MCF 10A (cell line): ENCODE measurements at regions of chr20 and their contacts with region 1.

Region 1: DNA sequence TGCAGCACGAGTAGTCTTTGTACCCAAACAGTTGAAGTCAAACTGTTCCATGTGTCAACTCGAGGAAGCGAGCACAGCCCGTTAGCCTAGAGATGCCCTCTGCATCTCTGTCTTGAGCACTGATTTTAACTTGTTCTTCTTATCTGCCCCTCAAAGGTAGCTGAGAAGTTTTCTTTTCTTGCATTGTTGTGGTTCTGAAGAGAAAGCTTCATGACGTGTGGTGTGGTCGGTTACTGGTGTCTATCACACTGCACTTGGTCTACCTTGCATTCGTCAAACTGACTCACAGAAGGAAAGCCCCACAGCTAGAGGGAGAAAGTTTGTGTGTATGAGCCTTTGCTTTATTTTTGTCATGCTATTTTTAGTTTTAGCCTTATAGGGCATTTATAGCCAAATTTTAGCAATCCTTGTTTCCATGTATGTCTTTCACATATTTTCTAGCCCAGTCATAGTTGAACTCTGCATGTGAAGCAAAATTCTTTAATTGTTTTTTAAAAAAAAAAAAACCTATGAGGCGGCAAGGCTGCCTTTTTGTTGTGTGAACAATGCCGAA is 115.1 kb downstream of the JAG1 start:
- DNase-seq: peak; percentile 90
- H3K4me3 Mint-ChIP-seq: peak overlapping the region; percentile 18
- H3K27ac Mint-ChIP-seq: peak overlapping the region; percentile 68
- H3K4me1 Mint-ChIP-seq: peaks cover 26% of the 10 kb centered on the region
- H3K27me3 Mint-ChIP-seq: no peaks in the 10 kb centered on the region
- CTCF ChIP-seq: no peak

Region 2: GRCh38 chr20:10573273-10573950 is 14.7 kb after region 1 on chr20:
- CTCF ChIA-PET with region 1: interaction called, 3 read pairs
- POLR2A ChIA-PET with region 1: interaction called, 20 read pairs
- intact Hi-C with region 1: no loop called
- DNase-seq: no peak
- H3K4me3 Mint-ChIP-seq: no peak overlapping the region
- H3K27ac Mint-ChIP-seq: no peak overlapping the region
- H3K4me1 Mint-ChIP-seq: peaks cover 6% of the 10 kb centered on the region
- H3K27me3 Mint-ChIP-seq: no peaks in the 10 kb centered on the region
- CTCF ChIP-seq: no peak

Region 3: GRCh38 chr20:10578607-10579006 is 19.9 kb after region 1 on chr20:
- CTCF ChIA-PET with region 1: interaction called, 5 read pairs
- POLR2A ChIA-PET with region 1: interaction called, 20 read pairs
- intact Hi-C with region 1: no loop called
- DNase-seq: peak; percentile 54
- H3K4me3 Mint-ChIP-seq: no peak overlapping the region
- H3K27ac Mint-ChIP-seq: peak overlapping the region; percentile 71
- H3K4me1 Mint-ChIP-seq: peaks cover 32% of the 10 kb centered on the region
- H3K27me3 Mint-ChIP-seq: no peaks in the 10 kb centered on the region
- CTCF ChIP-seq: no peak

Region 4: GRCh38 chr20:10626896-10627295 is 68.2 kb after region 1 on chr20:
- CTCF ChIA-PET with region 1: interaction called, 7 read pairs
- POLR2A ChIA-PET with region 1: interaction called, 20 read pairs
- intact Hi-C with region 1: no loop called
- DNase-seq: peak; percentile 86
- H3K4me3 Mint-ChIP-seq: no peak overlapping the region
- H3K27ac Mint-ChIP-seq: peak overlapping the region; percentile 27
- H3K4me1 Mint-ChIP-seq: peaks cover 25% of the 10 kb centered on the region
- H3K27me3 Mint-ChIP-seq: no peaks in the 10 kb centered on the region
- CTCF ChIP-seq: no peak

Region 5: GRCh38 chr20:10667077-10667401 is 108.3 kb after region 1 on chr20:
- CTCF ChIA-PET with region 1: interaction called, 35 read pairs
- POLR2A ChIA-PET with region 1: interaction called, 60 read pairs
- intact Hi-C with region 1: loop called (anchors 1 kb)
- DNase-seq: peak; percentile 78
- H3K4me3 Mint-ChIP-seq: peak overlapping the region; percentile 33
- H3K27ac Mint-ChIP-seq: peak overlapping the region; percentile 68
- H3K4me1 Mint-ChIP-seq: peaks cover 46% of the 10 kb centered on the region
- H3K27me3 Mint-ChIP-seq: no peaks in the 10 kb centered on the region
- CTCF ChIP-seq: no peak

Region 6: DNA sequence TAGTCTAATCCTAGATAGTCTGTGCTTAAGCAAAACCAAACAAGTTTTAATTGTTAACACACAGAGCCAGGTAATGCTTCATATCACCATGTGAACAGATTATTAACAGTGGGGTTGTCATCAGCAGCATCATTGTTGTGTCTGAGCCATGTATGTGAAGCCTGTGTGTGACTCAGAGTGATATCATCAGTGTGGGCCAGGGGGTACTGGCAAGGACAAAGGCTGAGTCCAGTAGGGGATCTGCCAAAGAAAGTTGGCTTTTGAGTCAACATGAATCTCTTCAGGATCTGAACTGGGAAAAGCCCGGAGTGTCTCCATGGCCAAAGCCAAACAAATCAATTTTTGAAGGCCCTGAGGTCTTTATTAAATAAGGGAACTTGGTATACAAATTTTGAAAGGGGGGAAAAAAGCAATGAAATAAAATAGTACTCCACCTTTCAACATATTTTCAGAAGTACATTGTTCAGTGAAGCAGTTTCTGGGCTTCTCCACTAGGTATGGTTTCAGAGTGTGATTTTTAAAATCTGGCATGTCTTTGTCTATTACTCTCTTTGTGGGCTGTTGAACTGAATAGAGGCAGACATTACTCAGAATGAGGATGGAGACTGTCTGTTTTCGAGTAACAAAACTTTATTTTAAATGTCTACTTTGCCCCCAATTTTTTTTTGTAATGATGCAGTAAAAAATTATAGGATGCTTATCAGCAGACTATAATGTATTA is 559.3 kb after region 1 on chr20:
- CTCF ChIA-PET with region 1: no interaction called
- POLR2A ChIA-PET with region 1: no interaction called
- intact Hi-C with region 1: no loop called
- DNase-seq: peak; percentile 78
- H3K4me3 Mint-ChIP-seq: no peak overlapping the region
- H3K27ac Mint-ChIP-seq: peak overlapping the region; percentile 35
- H3K4me1 Mint-ChIP-seq: peaks cover 2% of the 10 kb centered on the region
- H3K27me3 Mint-ChIP-seq: no peaks in the 10 kb centered on the region
- CTCF ChIP-seq: no peak